Activated CD4-positive, alpha-beta T cell treated with anti-CD3 and anti-CD28 coated beads, Interleukin-2, amount 10 ng/mL, durations not matched to agents 7 days and 5 days (primary cell): ENCODE measurements at regions of chr15 and their contacts with region 1.

Region 1: DNA sequence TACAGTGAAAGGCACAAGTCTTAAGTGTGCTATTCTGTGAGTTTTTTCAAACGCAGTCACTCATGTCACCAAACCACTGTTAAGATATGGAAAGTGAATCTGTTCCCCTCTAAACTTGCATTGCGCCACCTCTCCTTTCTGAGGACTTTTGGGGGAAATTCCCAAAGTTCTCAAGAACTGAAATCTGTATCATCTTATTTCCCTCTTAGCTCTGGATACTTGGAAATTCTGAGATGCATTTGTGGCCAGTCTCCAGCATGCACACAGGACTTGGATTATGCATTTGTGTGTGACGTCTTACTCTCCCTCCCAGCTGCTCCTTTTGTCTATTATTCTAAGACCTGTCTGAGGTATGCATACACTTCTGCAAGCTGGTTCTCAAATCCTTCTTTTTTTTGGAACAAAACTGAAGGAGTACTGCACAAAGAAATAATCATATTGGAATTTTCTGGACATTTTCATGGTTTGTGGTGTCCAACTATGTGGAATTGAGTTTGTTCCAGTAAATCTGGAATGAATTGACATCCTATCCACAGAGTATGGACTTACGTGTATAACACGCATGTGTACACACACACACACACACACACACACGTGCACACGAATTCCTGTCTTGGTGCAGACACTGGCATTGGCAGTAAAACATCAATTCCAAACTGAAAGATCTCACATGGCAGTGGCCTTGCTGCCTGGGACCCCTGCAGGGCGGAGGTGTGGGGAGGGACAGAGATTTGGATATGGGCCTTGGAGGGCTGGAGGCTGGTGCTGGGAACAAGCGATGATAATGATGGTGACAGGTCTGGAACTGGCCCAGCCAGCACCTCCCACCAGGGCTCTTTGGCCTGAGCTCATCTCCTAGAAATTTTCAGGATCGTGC is 8.2 kb upstream of the LCTL start:
- DNase-seq: no peak
- H3K4me3 Mint-ChIP-seq: no peak overlapping the region
- H3K27ac Mint-ChIP-seq: no peak overlapping the region
- H3K4me1 Mint-ChIP-seq: no peaks in the 10 kb centered on the region
- H3K27me3 Mint-ChIP-seq: no peaks in the 10 kb centered on the region

Region 2: DNA sequence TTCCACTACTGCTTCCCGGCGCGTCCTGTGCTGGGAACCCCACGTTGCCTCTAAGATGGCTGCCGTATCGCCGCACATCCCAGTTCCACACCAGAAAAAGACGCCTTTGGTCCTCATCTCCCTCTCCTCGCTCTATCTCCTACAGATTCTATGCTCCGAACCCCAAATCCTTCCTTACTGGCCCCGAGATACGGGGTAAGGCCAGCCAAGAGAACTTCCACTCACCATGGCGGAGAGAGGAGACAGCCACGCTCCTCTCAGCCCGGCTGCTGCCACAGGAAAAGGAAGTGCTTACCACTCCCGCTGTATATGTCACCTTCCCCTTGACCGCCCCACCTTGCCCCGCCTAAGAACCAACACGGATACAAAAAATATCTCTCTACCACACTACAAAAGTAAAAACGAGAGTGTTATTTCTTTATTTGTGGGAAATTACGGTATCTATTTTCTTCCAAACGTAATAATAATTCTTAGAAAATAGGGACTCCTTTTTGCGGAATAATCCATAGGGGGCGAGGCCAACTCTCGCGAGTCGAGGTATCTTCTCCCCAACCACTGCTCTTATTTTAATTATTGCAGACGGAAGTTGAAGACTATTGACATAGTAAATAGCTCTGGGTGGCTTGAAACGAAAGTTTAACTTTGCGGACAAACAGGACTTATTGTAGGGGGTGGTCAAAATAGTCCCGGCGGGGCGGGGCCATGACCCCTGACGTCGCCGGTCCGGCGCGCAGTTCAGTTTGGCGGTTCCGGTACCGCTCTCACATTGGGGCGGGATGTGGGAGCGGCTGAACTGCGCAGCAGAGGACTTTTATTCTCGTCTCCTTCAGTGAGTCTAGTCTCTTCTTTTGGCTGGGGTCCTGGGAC is 69.2 kb before region 1 on chr15 and contains the starts of genes RPL4 and ZWILCH:
- CTCF ChIA-PET with region 1: no interaction called
- POLR2A ChIA-PET with region 1: no interaction called
- DNase-seq: peak; percentile 85
- H3K4me3 Mint-ChIP-seq: peak within 1 kb of the TSS; percentile 100
- H3K27ac Mint-ChIP-seq: peak within 1 kb of the TSS; percentile 99
- H3K4me1 Mint-ChIP-seq: peaks cover 61% of the 10 kb centered on the region
- H3K27me3 Mint-ChIP-seq: no peaks in the 10 kb centered on the region
- total RNA-seq, gene RPL4: 2,398 to 2,621 TPM
- total RNA-seq, gene ZWILCH: 28.0 to 28.3 TPM

Region 3: GRCh38 chr15:66586155-66586976 is 12.4 kb after region 1 on chr15:
- CTCF ChIA-PET with region 1: interaction called, 12 read pairs
- POLR2A ChIA-PET with region 1: no interaction called
- DNase-seq: no peak
- H3K4me3 Mint-ChIP-seq: no peak overlapping the region
- H3K27ac Mint-ChIP-seq: no peak overlapping the region
- H3K4me1 Mint-ChIP-seq: no peaks in the 10 kb centered on the region
- H3K27me3 Mint-ChIP-seq: peaks cover 2% of the 10 kb centered on the region